HEK293T (cell line): ENCODE measurements at regions of chr1 and their contacts with region 1.

Region 1: DNA sequence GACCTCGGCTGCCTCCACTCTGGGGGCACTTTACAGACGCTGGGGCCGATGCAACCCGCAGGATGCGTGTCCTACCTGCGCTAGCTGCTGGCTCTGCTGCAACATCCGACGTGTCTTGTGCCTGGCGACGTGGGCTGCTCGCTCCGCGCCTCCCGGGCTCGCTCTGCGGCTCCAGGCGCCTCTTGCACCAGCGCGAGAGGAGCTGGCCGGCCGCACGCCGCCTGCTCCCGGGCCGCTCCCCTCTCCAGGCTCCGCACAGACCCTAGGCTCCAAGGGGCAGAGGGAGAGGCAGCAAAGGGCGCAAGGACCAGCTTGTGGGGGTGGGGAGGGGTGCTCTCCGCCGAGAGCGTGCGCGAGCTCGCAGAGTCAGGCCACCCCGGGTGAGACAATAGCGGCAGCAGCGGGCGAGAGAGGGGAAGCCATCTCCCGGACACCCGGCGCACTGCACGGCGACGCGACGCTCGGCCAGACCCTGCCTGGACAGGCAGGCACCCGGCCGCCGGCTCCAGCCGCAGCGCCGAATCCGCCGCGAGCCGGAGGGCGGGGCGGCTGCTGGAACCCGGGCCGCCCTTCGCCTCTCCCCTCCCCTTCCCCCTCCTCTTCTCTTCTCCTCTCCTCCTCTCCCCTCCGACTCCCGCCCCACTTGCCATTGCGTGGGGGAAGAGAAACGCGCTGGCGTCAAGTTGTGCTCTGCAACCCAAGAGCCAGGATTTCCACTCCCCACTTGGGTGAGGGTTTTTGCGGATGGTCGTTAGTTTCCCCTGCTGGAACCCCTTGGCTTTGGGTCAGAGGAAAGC is at the start of gene PIK3C2B:
- DNase-seq: peak; percentile 92

Region 2: GRCh38 chr1:204151552-204152309 is 342.7 kb before region 1 on chr1 and contains the start of gene ETNK2:
- CTCF ChIA-PET with region 1: no interaction called
- POLR2A ChIA-PET with region 1: no interaction called
- DNase-seq: peak; percentile 92

Region 3: DNA sequence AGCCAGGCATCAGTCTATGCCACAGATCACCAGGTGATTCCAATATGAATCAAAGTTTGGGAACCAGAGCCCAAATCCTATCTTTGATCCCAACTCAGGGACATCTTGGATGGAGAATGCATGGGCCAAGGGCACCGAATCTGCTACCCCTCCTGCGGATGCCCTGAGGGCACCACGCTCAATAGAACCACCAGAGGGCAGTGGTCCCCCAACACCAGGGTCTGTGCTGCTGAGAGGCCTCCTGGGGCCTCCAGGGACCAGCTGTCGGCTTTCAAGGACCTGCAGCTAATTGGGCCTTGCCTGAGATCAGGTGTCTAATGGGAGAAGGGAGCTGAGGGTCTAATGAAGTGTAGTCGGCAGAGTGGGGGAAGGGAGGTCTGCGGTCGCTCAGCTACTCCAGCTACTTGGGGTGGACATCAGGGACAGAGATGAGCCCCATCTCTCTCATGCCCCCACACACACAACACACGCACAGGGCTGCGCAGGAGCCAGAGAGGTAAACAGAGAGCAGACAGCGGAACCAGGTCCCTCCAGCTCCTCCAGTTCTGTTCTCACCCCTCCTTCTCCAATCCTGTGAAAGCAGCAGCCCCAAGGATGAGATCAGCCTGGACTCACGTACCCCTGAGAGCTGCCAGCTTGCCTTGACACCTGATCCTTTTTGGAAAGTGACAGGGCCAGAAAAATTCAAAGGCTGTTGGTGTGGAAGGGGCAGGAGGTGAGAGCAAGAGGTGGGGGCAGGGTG is 47.9 kb before region 1 on chr1:
- CTCF ChIA-PET with region 1: interaction called, 20 read pairs
- POLR2A ChIA-PET with region 1: interaction called, 4 read pairs
- DNase-seq: peak; percentile 83

Region 4: GRCh38 chr1:204478172-204478899 is 16.1 kb before region 1 on chr1:
- CTCF ChIA-PET with region 1: interaction called, 11 read pairs
- POLR2A ChIA-PET with region 1: interaction called, 6 read pairs
- DNase-seq: no peak

Region 5: DNA sequence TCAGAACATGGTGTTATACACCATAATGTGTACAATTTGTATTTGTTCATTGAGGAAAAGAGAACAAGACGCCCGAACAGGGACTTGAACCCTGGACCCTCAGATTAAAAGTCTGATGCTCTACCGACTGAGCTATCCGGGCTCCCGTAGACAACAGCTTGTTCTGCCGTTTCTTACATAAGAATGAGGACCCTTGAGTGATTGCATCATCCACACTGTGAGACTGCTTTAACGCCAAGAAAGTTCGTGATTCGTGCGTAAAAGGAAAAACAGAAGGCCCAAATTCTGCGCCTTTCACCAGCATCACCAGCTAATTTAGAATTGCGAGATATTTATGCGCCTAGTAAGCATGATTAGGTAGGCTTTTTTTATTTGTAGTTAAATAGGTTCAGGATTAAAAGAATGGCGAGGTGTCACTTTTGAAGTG is 12.5 kb after region 1 on chr1:
- CTCF ChIA-PET with region 1: interaction called, 23 read pairs
- POLR2A ChIA-PET with region 1: interaction called, 30 read pairs
- DNase-seq: peak; percentile 69

Region 6: DNA sequence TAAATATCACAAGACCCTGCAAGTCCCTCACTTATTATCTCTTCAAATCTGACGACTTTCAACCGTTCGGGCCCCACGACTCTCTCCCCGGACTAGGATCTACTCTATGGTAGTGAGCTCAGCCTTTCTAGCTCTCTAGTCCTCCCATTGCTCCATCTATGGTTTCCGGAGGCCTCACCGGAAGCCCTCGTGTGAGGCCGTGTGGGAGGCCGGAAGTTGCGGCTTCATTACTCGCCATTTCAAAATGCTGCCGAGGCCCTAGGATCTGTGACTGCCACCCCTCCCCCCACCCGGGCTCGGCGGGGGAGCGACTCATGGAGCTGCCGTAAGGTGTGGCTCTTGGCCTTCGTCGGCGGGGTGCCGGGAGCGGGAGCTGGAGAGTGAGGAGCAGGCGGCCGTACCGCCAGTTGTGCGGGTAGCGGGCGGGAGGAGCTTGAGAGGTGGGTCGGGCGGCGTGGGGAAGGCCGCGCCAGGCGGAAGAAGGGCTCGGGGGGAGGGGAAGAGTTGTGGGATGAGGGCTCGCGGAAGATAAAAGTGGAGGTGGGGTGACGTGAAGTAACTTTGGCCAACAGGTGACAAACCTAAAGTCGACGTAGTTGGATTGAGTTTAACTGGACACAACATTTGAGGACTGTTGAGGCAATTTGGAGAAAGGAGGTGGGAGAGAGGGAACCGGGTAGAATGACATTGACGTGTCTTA is 21.9 kb after region 1 on chr1 and contains the start of gene MDM4:
- CTCF ChIA-PET with region 1: interaction called, 3 read pairs
- POLR2A ChIA-PET with region 1: interaction called, 13 read pairs
- DNase-seq: peak; percentile 94

Region 7: GRCh38 chr1:204541626-204542025 is 47.1 kb after region 1 on chr1:
- CTCF ChIA-PET with region 1: no interaction called
- POLR2A ChIA-PET with region 1: no interaction called
- DNase-seq: no peak